Heart left ventricle (tissue), 16 donors: ENCODE measurements at regions of chr5 and their contacts with region 1.

Region 1: GRCh38 chr5:102654559-102655349 is 100.4 kb upstream of the PAM start:
- DNase-seq: no peak
- ATAC-seq: peak in 3 of 4 donors; percentile 50 to 81 (median 72)
- H3K4me3 ChIP-seq: no peak overlapping the region
- H3K27ac ChIP-seq: peak overlapping the region in 3 of 12 donors; percentile 15 to 21 (median 20)
- H3K4me1 ChIP-seq: peaks cover 0 to 4% (median 0%) of the 10 kb centered on the region in 12 donors
- H3K27me3 ChIP-seq: no peaks in the 10 kb centered on the region
- CTCF ChIP-seq: no peak
- POLR2A ChIP-seq: no peak

Region 2: DNA sequence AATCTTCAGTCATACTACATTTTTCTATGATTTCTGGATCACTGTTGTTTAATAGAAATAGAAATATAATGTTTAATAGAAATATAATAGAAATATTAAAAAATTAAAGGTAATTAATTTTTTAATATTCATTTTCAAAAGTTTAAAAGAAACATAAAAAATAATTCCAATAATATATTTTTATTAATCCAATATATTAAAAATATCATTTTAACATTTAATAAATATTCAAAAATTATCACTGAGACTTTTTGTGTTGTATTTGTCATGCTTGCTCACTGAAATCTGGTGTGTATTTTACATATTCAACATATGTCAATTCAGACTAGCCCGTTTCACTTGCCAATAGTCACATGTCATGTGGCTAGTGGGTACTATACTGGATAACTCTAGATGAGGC is 75.4 kb before region 1 on chr5:
- intact Hi-C with region 1: no loop called
- DNase-seq: no peak
- ATAC-seq: no peak
- H3K4me3 ChIP-seq: no peak overlapping the region
- H3K27ac ChIP-seq: no peak overlapping the region
- H3K4me1 ChIP-seq: no peaks in the 10 kb centered on the region
- H3K27me3 ChIP-seq: no peaks in the 10 kb centered on the region
- CTCF ChIP-seq: no peak
- POLR2A ChIP-seq: no peak

Region 3: GRCh38 chr5:102591650-102592049 is 63.1 kb before region 1 on chr5:
- intact Hi-C with region 1: loop called in 1 of 10 experiments (anchors 5 kb)
- DNase-seq: no peak
- ATAC-seq: no peak
- H3K4me3 ChIP-seq: no peak overlapping the region
- H3K27ac ChIP-seq: no peak overlapping the region
- H3K4me1 ChIP-seq: no peaks in the 10 kb centered on the region
- H3K27me3 ChIP-seq: no peaks in the 10 kb centered on the region
- CTCF ChIP-seq: no peak
- POLR2A ChIP-seq: no peak